ENCODE measurements at regions of chr11 and their contacts with region 1.

Region 1: DNA sequence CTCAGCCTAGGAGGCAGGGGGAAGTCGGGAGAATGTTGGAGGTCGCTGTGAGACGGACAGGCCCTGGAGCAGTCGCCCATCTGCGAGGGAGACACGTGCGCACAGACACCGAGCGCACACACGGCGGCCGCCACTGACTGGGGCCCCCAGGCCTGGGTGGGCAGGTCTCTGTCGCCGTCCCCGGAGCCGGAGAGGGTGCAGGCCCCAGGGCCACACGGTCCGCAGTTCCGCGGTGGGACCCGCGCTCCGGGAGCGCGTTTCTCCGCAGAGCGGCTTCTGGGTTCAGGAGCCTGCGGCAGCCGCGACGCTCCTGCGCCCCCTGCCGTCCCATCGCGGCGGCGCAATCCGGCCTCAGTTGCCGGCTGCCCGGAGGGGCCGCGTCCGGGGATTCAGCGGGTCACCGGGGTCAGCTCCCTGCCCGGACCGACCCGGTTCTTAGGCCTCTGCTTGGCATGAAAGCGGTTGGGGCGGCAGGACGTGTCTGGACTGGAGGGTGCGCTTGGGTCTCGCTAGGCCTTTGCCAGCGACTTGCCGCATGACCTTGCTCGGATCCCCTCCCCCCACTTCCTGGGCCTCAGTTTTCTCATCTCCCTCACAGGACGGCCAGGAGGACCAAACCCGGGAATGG is 31.2 kb downstream of the PDE2A start:
- DNase-seq: peak; percentile 59
- H3K4me3 Mint-ChIP-seq: no peak overlapping the region
- H3K27ac Mint-ChIP-seq: no peak overlapping the region
- H3K4me1 Mint-ChIP-seq: no peaks in the 10 kb centered on the region
- H3K27me3 Mint-ChIP-seq: peaks cover 5% of the 10 kb centered on the region

Region 2: DNA sequence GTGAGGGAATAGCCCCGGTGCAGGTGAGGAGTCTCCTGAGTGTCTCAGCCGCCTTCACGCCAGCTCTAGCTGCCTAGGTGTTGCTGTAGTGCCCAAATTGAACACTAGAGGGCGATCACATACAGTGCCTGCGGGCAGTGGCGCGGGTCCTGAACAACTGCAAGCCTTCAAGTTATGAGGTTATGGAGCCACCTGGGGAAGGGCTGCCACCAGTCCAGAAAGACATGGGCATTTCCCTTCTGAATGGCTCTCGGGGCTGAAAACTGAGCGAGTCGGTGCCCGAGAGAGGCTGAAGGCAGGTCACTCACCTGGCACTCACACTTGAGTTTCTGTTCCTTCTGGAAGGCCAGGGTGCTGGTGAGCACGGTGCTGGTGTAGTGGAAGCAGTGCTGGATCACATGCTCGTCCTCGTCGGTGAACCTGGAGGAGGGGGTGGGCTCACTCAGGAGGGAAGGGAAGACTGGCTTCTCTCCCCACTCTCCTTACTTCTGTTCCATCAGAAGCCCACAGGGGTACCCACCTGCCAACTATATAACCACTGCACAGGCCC is 57.2 kb before region 1 on chr11:
- intact Hi-C with region 1: loop called (anchors 1 kb)
- DNase-seq: peak; percentile 55
- H3K4me3 Mint-ChIP-seq: peak overlapping the region; percentile 40
- H3K27ac Mint-ChIP-seq: no peak overlapping the region
- H3K4me1 Mint-ChIP-seq: peaks cover 18% of the 10 kb centered on the region
- H3K27me3 Mint-ChIP-seq: peaks cover 51% of the 10 kb centered on the region

Region 3: GRCh38 chr11:72625691-72626413 is 17.1 kb before region 1 on chr11:
- intact Hi-C with region 1: no loop called
- DNase-seq: no peak
- H3K4me3 Mint-ChIP-seq: no peak overlapping the region
- H3K27ac Mint-ChIP-seq: no peak overlapping the region
- H3K4me1 Mint-ChIP-seq: peaks cover 18% of the 10 kb centered on the region
- H3K27me3 Mint-ChIP-seq: peaks cover 14% of the 10 kb centered on the region

Measured in activated T-helper 2 cell treated with anti-CD3 and anti-CD28 coated beads, Interferon-gamma antibody, Interleukin-2, Interleukin-4, amounts not matched to agents 10 μg/mL and 5 μg/mL and 100 μg/mL, durations not matched to agents 14 hours and 24 hours and 36 hours (primary cell).